Activated CD8-positive, alpha-beta T cell treated with anti-CD3 and anti-CD28 coated beads, Interleukin-2, amount 10 ng/mL, durations not matched to agents 7 days and 5 days (primary cell): ENCODE measurements at regions of chr6 and their contacts with region 1.

Region 1: GRCh38 chr6:37018198-37019064 is 13.0 kb downstream of the FGD2 start:
- DNase-seq: peak; percentile 96
- ATAC-seq: peak; percentile 95
- H3K4me3 Mint-ChIP-seq: no peak overlapping the region
- H3K27ac Mint-ChIP-seq: peak overlapping the region; percentile 62
- H3K4me1 Mint-ChIP-seq: peaks cover 56% of the 10 kb centered on the region
- H3K27me3 Mint-ChIP-seq: no peaks in the 10 kb centered on the region

Region 2: DNA sequence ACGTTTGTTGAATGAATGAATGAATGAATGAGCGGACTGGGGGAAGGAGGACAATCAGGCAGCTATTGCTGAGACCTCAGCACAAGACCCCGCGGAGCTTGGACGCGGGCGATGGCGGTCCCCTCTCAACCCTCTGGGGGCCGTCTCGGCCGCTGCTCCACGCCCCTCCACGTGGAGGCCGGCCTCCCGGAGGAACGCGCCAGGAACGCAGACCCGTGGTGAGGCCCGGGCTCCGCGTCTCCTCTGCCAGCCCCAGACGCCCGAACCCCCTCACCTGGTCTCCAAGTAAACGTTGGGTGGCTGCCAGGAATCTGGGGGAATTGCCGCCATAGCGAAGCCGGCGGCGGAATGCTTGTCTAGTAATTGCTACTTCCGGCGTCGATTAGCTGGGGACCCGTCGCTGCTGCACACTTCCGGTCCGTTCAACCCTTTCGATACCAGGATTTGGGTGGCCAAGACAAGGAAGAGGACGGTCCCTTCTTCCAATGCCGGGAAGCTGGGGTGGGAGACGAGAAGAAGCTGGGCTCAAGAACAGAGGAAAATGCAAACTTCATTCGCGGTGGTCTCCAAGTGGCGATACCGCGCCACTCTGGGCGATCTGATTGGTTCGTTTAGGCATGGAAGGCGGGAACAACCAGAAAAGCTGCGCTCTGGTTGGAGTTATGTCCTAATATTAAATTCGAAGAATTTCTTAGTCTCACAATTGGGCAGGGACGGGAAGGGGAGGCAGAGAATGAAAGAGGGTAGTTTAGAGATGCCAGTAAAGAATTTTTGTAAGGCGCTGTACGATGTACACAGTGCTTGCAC is 143.8 kb before region 1 on chr6 and contains the start of gene PPIL1:
- CTCF ChIA-PET with region 1: interaction called, 176 read pairs
- POLR2A ChIA-PET with region 1: interaction called, 7 read pairs
- DNase-seq: peak; percentile 89
- ATAC-seq: peak; percentile 94
- H3K4me3 Mint-ChIP-seq: peak within 1 kb of the TSS; percentile 83
- H3K27ac Mint-ChIP-seq: peak within 1 kb of the TSS; percentile 98
- H3K4me1 Mint-ChIP-seq: peaks cover 47% of the 10 kb centered on the region
- H3K27me3 Mint-ChIP-seq: peaks cover 8% of the 10 kb centered on the region
- total RNA-seq, gene PPIL1: 32.6 to 33.5 TPM

Region 3: DNA sequence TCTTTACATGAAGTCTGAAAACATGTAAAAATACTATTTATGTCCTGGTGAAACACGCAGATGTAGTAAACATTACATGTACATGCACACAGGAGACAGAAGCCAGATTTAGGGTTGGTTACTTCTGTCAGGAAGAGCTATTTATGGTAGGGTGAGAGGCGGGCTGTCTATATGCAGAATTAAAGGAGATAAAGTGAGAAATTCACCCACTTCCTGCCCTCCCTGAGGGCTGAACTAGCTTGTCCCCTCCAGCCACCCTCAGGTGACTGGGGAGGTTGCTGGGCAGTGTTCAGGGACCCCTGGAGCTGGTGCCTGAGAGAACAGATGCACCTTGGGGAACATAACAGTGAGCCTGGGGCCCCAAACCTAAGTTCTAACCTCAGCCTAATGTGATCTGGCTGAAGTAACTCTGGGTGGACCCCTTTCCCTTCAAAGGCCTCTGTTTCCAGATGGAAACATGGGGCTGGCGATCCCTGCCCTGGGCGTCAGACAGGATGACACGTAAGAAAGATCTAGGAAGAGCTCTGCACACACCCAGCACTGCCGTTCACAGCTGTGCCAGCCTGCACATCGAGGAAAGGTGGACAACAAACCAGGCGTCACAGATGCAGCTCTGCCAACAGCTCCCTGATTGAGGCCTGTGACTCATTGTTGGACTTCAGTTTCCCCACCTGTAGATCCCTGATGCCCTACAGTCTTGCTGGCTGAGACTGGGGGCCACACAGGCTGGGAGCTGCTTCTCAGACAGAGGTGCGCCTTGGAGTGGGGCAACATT is 62.6 kb before region 1 on chr6:
- CTCF ChIA-PET with region 1: interaction called, 31 read pairs
- POLR2A ChIA-PET with region 1: no interaction called
- DNase-seq: no peak
- ATAC-seq: peak; percentile 38
- H3K4me3 Mint-ChIP-seq: no peak overlapping the region
- H3K27ac Mint-ChIP-seq: no peak overlapping the region
- H3K4me1 Mint-ChIP-seq: peaks cover 39% of the 10 kb centered on the region
- H3K27me3 Mint-ChIP-seq: peaks cover 17% of the 10 kb centered on the region

Region 4: GRCh38 chr6:37029249-37029971 is 11.0 kb after region 1 on chr6:
- CTCF ChIA-PET with region 1: interaction called, 108 read pairs
- POLR2A ChIA-PET with region 1: interaction called, 3 read pairs
- DNase-seq: peak; percentile 64
- ATAC-seq: peak; percentile 62
- H3K4me3 Mint-ChIP-seq: no peak overlapping the region
- H3K27ac Mint-ChIP-seq: peak overlapping the region; percentile 75
- H3K4me1 Mint-ChIP-seq: peaks cover 84% of the 10 kb centered on the region
- H3K27me3 Mint-ChIP-seq: no peaks in the 10 kb centered on the region

Region 5: GRCh38 chr6:37110500-37111461 is 92.3 kb after region 1 on chr6:
- CTCF ChIA-PET with region 1: interaction called, 10 read pairs
- POLR2A ChIA-PET with region 1: no interaction called
- DNase-seq: no peak
- ATAC-seq: peak; percentile 44
- H3K4me3 Mint-ChIP-seq: no peak overlapping the region
- H3K27ac Mint-ChIP-seq: peak overlapping the region; percentile 28
- H3K4me1 Mint-ChIP-seq: peaks cover 27% of the 10 kb centered on the region
- H3K27me3 Mint-ChIP-seq: peaks cover 3% of the 10 kb centered on the region

Region 6: DNA sequence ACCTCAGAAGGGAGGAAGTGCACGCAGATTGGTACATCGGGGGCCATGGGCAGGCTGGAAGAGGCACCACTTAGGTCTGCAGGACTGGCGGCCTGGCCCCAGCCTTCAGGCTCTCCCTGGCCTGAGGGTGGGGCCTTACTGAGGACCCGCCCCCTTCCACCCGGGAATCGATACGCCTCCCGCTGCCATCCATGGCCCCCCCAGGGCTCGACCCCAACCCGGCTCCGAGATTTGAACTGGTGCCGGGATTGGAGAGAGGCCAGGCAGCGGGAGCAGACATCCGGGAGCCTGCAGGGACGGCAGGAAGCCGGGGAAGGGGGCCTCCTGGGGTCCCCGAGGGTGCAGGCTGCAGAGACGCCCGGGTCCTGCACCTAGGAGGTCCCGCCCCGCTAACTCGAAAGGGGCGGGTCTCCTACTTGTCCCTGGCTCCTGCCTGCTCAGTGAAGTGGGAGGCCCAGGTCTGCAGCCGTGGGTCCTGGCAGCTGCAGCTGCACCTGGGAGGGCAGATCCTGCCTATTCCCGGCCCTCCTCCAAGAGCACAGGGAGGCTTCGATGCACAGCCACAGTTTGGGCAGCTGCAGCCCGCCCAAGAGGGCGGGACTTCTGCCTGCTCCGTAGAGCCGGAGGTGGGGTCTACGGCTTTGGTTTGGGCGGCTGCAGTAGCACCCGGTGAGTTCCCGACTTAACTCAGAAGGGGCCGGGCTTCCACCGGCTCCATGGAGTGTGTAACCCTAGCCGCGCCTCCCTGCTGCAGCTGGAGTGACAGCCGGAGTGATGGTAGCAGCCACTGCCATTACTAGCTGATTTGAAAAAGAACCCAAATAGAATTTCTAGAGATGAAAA is 203.9 kb after region 1 on chr6:
- CTCF ChIA-PET with region 1: interaction called, 769 read pairs
- POLR2A ChIA-PET with region 1: interaction called, 3 read pairs
- DNase-seq: peak; percentile 86
- ATAC-seq: peak; percentile 97
- H3K4me3 Mint-ChIP-seq: peak overlapping the region; percentile 81
- H3K27ac Mint-ChIP-seq: peak overlapping the region; percentile 65
- H3K4me1 Mint-ChIP-seq: peaks cover 38% of the 10 kb centered on the region
- H3K27me3 Mint-ChIP-seq: no peaks in the 10 kb centered on the region